ENCODE measurements at regions of chr3 and their contacts with region 1.

Region 1: DNA sequence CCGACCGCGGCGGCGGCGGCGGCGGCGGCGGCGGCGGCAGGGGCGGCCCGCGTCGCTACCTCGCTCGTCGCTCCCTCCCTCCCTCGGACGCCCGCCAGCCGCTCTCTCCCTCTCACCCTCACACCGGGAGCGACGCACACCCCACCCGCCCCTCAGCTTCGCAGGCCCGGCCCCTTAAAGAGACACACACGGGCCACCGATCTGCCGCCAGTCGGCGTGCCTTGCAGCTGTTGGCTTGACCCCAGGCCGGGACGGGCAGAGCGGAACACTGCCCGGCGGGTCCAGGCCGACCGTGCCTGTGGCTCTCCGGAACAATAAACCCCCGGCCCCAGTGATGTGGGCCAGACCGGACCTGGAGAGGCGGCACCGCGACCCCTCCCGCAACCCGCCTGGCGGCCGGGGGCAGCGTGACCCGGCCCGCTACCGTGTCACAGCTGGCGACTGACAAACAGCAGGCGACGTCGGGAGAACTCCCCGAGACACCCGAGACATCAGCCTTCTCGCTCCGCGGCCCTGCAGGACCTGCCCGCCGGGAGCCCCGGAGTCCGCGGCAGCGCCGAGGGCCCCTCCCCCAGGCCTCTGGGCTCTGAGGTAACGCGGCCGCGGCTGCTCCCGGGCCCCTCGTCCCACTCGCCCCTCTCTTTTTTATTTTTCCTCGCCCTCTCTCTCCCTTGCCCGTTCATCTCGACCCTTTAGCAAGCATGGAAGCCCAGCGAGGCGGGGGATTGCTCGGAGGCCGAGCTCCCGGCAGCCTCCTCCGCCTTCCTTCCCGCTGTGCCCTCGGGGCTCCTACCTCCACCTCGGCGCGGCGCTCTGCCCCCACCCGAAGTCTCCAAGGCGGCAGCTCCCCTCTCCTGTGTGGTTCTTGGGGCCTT is at the start of gene SETD2:
- DNase-seq: peak; percentile 93
- H3K4me3 ChIP-seq: peak within 1 kb of the TSS; percentile 85
- H3K27ac ChIP-seq: peak within 1 kb of the TSS; percentile 85
- H3K4me1 ChIP-seq: peaks cover 45% of the 10 kb centered on the region
- CTCF ChIP-seq: peak; percentile 79
- total RNA-seq, gene SETD2: 55.7 and 62.7 TPM in 2 replicates

Region 2: DNA sequence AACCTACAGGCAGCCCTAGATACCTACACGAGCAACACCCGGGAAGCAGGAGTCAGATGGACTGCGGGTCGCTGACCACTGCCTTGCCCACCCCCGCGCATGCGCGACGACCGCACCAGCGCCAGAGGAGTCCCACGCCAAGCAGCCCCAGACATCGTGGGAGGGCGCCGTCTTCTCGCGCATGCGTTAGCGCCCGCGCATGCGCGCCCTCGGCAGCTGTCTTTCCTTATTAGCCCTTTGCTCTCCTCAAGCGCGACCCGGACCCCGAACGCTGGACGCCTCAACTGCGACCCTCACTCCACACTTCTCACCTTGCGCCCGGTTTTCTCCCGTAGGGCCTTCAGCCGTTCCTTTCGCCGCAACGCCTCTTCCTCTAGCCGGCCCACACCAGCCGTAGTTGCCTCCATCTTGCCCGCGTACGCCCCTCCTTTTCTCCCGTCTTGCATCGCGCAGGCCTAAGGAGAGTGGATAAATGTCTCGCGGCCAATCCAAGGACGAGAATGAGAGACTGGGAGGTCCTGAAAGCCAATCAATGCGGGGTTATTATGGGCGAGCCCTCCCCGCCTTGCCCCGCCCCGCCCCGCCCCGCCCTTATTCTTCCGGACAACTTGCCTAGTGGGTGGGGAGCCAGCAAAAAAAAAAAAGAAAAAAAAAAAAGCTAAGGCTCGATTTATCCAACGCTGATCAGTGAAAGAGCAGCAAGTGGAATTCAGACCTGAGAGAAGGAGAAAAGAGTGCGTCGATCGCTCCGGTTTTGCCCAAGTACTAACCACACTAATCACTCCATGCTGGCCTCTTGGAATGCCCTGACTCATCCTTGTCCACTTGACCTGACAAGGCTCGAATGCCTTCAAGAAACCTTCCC is 187.7 kb before region 1 on chr3 and contains the start of gene CCDC12:
- CTCF ChIA-PET with region 1: no interaction called
- POLR2A ChIA-PET with region 1: no interaction called
- intact Hi-C with region 1: loop called (anchors 2 kb)
- DNase-seq: peak; percentile 98
- H3K4me3 ChIP-seq: peak within 1 kb of the TSS; percentile 74
- H3K27ac ChIP-seq: peak within 1 kb of the TSS; percentile 82
- H3K4me1 ChIP-seq: peaks cover 70% of the 10 kb centered on the region
- CTCF ChIP-seq: no peak
- total RNA-seq, gene CCDC12: 74.9 and 102 TPM in 2 replicates

Region 3: DNA sequence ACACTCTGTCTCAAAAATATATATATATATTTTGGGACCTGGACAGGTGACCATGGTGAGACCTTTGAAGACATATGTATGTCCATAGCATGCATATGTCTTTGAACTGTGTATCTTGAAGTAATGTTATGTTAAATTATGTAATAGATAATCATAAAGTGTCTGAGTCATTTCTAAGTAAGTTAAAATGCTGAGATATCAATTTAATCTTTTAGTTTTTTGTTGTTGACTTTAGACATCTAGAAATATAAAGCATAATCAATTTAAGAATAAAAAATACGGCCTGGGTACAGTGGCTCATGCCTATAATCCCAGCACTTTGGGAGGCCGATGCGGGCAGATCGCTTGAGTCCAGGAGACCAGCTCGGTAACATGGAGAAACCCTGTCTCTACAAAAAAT is 12.3 kb after region 1 on chr3:
- CTCF ChIA-PET with region 1: interaction called, 10 read pairs
- POLR2A ChIA-PET with region 1: interaction called, 11 read pairs
- intact Hi-C with region 1: no loop called
- DNase-seq: no peak
- H3K4me3 ChIP-seq: peak overlapping the region; percentile 49
- H3K27ac ChIP-seq: peak overlapping the region; percentile 94
- H3K4me1 ChIP-seq: peaks cover 47% of the 10 kb centered on the region
- CTCF ChIP-seq: no peak

Region 4: DNA sequence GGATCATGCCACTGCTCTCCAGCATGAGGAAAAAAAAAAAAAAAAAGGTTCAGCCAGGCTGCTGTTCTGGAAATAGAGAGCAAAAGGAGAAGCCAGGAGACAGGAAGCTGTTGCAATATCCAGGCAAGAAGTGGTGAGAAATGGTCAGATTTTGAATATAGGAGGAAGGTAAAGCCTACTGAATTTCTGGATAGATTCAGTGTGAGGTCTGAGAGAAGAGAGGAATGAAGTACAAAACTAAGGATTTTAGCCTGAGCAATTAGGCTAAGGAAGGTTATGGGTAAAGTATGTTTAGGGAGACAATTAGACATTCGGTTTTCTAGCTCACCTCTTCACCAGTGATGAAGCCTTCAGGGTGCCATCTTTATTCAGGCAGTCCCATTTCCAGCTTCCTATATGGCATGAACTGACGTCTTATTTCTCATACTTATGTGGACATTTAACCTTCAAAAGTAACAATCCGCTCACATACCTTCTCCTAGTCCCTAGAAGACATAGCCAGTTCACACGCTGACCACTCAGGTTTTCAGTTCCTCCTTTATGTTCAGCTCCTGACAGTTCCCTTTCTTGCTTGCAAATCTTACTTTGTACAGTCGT is 61.2 kb after region 1 on chr3:
- CTCF ChIA-PET with region 1: no interaction called
- POLR2A ChIA-PET with region 1: interaction called, 5 read pairs
- intact Hi-C with region 1: loop called (anchors 2 kb)
- DNase-seq: peak; percentile 53
- H3K4me3 ChIP-seq: no peak overlapping the region
- H3K27ac ChIP-seq: no peak overlapping the region
- H3K4me1 ChIP-seq: peaks cover 38% of the 10 kb centered on the region
- CTCF ChIP-seq: no peak

Region 5: GRCh38 chr3:47282424-47283192 is 118.4 kb after region 1 on chr3 and contains the starts of genes KIF9 and KLHL18:
- CTCF ChIA-PET with region 1: no interaction called
- POLR2A ChIA-PET with region 1: no interaction called
- intact Hi-C with region 1: loop called (anchors 1 kb)
- DNase-seq: peak; percentile 97
- H3K4me3 ChIP-seq: peak within 1 kb of the TSS; percentile 81
- H3K27ac ChIP-seq: peak within 1 kb of the TSS; percentile 71
- H3K4me1 ChIP-seq: peaks cover 45% of the 10 kb centered on the region
- CTCF ChIP-seq: no peak
- total RNA-seq, gene KIF9: 4.7 and 11.7 TPM in 2 replicates
- total RNA-seq, gene KLHL18: 11.8 and 13.1 TPM in 2 replicates

Region 6: GRCh38 chr3:47324278-47324865 is 160.1 kb after region 1 on chr3:
- CTCF ChIA-PET with region 1: no interaction called
- POLR2A ChIA-PET with region 1: no interaction called
- intact Hi-C with region 1: loop called (anchors 1 kb)
- DNase-seq: peak; percentile 81
- H3K4me3 ChIP-seq: no peak overlapping the region
- H3K27ac ChIP-seq: no peak overlapping the region
- H3K4me1 ChIP-seq: no peaks in the 10 kb centered on the region
- CTCF ChIP-seq: peak; percentile 88

Region 7: GRCh38 chr3:47380601-47381316 is 216.5 kb after region 1 on chr3 and contains the start of gene PTPN23:
- CTCF ChIA-PET with region 1: no interaction called
- POLR2A ChIA-PET with region 1: interaction called, 7 read pairs
- intact Hi-C with region 1: loop called (anchors 5 kb)
- DNase-seq: peak; percentile 99
- H3K4me3 ChIP-seq: peak within 1 kb of the TSS; percentile 75
- H3K27ac ChIP-seq: peak within 1 kb of the TSS; percentile 63
- H3K4me1 ChIP-seq: peaks cover 35% of the 10 kb centered on the region
- CTCF ChIP-seq: no peak
- total RNA-seq, gene PTPN23: 13.6 and 15.5 TPM in 2 replicates

Measured in OCI-LY7 (cell line).